Breast epithelium (tissue), 4 donors: ENCODE measurements at regions of chr20 and their contacts with region 1.

Region 1: GRCh38 chr20:63259734-63260460 is 5.6 kb upstream of the NKAIN4 start:
- DNase-seq: no peak
- H3K4me3 ChIP-seq: no peak overlapping the region
- H3K27ac ChIP-seq: no peak overlapping the region
- H3K4me1 ChIP-seq: no peaks in the 10 kb centered on the region
- H3K27me3 ChIP-seq: peaks cover 0 to 72% of the 10 kb centered on the region in 2 donors
- CTCF ChIP-seq: no peak
- POLR2A ChIP-seq: no peak

Region 2: GRCh38 chr20:63293861-63294535 is 34.1 kb after region 1 on chr20:
- intact Hi-C with region 1: loop called (anchors 1 kb)
- DNase-seq: no peak
- H3K4me3 ChIP-seq: no peak overlapping the region
- H3K27ac ChIP-seq: no peak overlapping the region
- H3K4me1 ChIP-seq: no peaks in the 10 kb centered on the region
- H3K27me3 ChIP-seq: peaks cover 12 to 64% of the 10 kb centered on the region in 2 donors
- CTCF ChIP-seq: no peak
- POLR2A ChIP-seq: no peak